Mammary epithelial cell (primary cell): ENCODE measurements at regions of chr18 and their contacts with region 1.

Region 1: GRCh38 chr18:62118328-62118727 is 68.5 kb downstream of the PIGN start:
- DNase-seq: no peak
- H3K4me3 ChIP-seq: no peak overlapping the region
- H3K27ac ChIP-seq: no peak overlapping the region
- H3K4me1 ChIP-seq: no peaks in the 10 kb centered on the region
- H3K27me3 ChIP-seq: no peaks in the 10 kb centered on the region
- CTCF ChIP-seq: no peak

Region 2: DNA sequence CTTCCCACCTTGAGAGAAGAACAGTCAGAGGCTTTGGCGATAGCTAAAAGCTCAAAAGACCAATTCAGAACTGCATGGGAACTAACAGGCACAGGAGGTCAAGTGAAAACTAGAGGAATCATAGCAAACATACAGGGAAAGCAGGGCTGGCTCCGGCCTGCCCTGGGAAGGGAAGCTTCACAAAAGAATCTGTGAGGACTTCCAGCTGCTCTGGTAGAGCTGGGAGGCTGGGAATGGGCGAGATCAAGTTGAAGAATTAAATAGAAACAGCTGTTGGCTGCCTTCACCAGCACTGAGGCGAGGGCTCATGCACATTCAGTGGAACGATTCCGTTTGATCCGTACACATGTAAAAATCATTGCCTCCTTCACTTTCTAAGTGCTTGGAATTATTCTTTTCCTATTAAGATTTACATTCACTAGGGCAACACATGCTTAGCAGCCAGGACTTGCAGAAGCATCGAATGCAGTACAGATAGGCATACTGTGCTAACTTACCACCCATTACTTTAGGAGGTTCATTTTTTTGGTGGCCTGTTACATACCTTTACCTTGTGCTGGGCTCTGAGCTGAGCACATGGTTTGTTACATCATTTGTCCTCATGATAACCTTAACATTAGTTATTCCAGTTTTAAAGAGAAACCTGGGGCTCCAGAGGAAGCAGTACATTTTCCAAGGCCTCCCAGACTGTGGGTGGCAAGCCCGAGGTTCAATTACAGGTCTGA is 100.1 kb before region 1 on chr18:
- CTCF ChIA-PET with region 1: no interaction called
- dilution Hi-C with region 1: loop called (anchors 5 kb)
- in situ Hi-C with region 1: no loop called
- intact Hi-C with region 1: no loop called
- DNase-seq: no peak
- H3K4me3 ChIP-seq: no peak overlapping the region
- H3K27ac ChIP-seq: no peak overlapping the region
- H3K4me1 ChIP-seq: no peaks in the 10 kb centered on the region
- H3K27me3 ChIP-seq: no peaks in the 10 kb centered on the region
- CTCF ChIP-seq: no peak

Region 3: DNA sequence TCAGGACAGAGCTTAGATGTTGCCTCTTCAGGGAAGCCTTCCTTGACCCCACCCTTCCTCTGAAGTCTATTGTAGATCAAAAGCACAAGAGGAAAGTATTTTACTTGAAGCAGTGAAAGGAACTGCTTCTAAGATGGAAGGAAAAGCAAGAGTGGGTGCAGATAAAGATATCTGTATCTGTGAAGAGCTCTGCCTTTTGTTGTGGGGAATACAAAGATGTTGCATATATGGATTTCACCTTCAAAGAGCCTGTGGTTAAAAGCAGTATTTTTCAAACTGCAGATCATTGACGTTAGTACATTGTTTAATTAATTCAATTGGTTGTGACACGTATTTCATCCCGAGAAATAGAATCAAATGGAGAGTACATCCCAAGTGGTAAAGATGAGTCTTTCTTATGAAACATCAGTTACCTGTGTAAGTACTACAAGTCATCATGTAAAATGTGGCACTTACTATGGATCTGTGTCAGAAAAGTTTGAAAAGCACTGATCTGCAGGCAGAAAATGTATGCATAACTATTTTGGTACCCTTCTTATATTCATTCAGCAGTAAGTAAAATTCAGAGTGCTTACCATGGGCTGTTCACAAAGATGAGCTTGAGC is 182.1 kb after region 1 on chr18:
- CTCF ChIA-PET with region 1: no interaction called
- dilution Hi-C with region 1: no loop called
- in situ Hi-C with region 1: no loop called
- intact Hi-C with region 1: no loop called
- DNase-seq: no peak
- H3K4me3 ChIP-seq: no peak overlapping the region
- H3K27ac ChIP-seq: no peak overlapping the region
- H3K4me1 ChIP-seq: no peaks in the 10 kb centered on the region
- H3K27me3 ChIP-seq: no peaks in the 10 kb centered on the region
- CTCF ChIP-seq: no peak